T-cell (primary cell): ENCODE measurements at regions of chr6 and their contacts with region 1.

Region 1: GRCh38 chr6:139375232-139376016 is 976 bp upstream of the CITED2 start:
- DNase-seq: peak; percentile 76 to 91 (median 83)
- ATAC-seq: peak; percentile 65 to 71 (median 67)
- H3K4me3 ChIP-seq: peak overlapping the region; percentile 94 to 99
- H3K4me3 Mint-ChIP-seq: peak overlapping the region; percentile 96 to 100 (median 99)
- H3K27ac ChIP-seq: peak overlapping the region; percentile 93
- H3K27ac Mint-ChIP-seq: peak overlapping the region; percentile 98 to 100
- H3K4me1 ChIP-seq: peaks cover 13% of the 10 kb centered on the region in 2 experiments
- H3K4me1 Mint-ChIP-seq: peaks cover 27 to 47% (median 29%) of the 10 kb centered on the region in 3 donors
- H3K27me3 ChIP-seq: no peaks in the 10 kb centered on the region
- H3K27me3 Mint-ChIP-seq: no peaks in the 10 kb centered on the region

Region 2: GRCh38 chr6:137697267-137697938 is 1678.0 kb before region 1 on chr6:
- CTCF ChIA-PET with region 1: no interaction called
- POLR2A ChIA-PET with region 1: no interaction called
- DNase-seq: no peak
- ATAC-seq: no peak
- H3K4me3 ChIP-seq: no peak overlapping the region
- H3K4me3 Mint-ChIP-seq: no peak overlapping the region
- H3K27ac ChIP-seq: no peak overlapping the region
- H3K27ac Mint-ChIP-seq: no peak overlapping the region
- H3K4me1 ChIP-seq: peaks cover 9 to 11% of the 10 kb centered on the region in 2 experiments
- H3K4me1 Mint-ChIP-seq: peaks cover 16 to 19% (median 16%) of the 10 kb centered on the region in 3 donors
- H3K27me3 ChIP-seq: peaks cover 0 to 8% of the 10 kb centered on the region in 2 experiments
- H3K27me3 Mint-ChIP-seq: peaks cover 5 to 8% of the 10 kb centered on the region in 2 donors

Region 3: DNA sequence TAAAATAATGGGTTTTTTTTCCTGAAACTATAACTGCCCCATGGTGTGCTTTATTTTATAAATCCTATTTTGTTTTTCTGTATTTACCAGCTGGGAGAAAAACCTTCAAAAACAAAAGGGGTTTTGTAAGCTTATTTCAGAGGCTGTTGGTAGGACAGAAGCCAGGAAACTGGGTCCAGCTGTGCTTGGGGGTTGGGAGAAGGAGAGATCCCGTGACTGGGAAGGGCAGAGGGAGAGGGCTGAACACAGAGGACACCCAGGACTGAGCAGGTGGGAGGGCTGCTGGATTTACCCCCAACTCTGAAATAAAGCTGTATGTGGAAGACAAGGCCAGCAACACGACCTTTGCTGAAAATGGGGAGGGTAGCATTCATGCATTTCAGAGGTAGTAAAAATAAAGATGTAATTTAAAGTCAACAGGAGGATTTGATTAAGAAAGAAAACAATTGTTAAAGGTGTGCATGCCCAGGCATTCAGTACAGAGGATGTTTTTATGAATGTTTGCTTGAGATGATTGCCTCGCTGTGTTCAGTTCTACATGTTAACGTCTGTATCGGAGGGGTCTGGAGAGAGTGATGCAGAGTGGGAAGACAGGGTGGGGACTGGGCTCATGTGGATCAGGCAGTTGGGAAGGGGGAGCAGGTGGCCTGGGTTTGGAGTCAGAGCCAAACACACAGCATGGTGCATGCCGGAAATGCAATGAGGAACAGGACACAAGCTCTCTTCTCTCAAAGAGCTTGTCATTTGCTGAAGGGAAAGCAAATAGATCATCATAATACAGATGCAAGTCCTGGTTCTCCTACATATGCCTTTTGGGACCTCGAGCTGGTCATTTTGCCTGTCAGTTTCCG is 1192.3 kb before region 1 on chr6:
- CTCF ChIA-PET with region 1: no interaction called
- POLR2A ChIA-PET with region 1: no interaction called
- DNase-seq: no peak
- ATAC-seq: no peak
- H3K4me3 ChIP-seq: no peak overlapping the region
- H3K4me3 Mint-ChIP-seq: no peak overlapping the region
- H3K27ac ChIP-seq: no peak overlapping the region
- H3K27ac Mint-ChIP-seq: no peak overlapping the region
- H3K4me1 ChIP-seq: no peaks in the 10 kb centered on the region
- H3K4me1 Mint-ChIP-seq: no peaks in the 10 kb centered on the region
- H3K27me3 ChIP-seq: peaks cover 0 to 12% of the 10 kb centered on the region in 2 experiments
- H3K27me3 Mint-ChIP-seq: peaks cover 24 to 28% of the 10 kb centered on the region in 2 donors

Region 4: GRCh38 chr6:139124887-139125672 is 250.3 kb before region 1 on chr6:
- CTCF ChIA-PET with region 1: interaction called, 3 to 17 read pairs
- POLR2A ChIA-PET with region 1: interaction called, 3 to 10 read pairs
- DNase-seq: peak; percentile 59 to 91 (median 78)
- ATAC-seq: peak; percentile 98 to 99 (median 98)
- H3K4me3 ChIP-seq: no peak overlapping the region
- H3K4me3 Mint-ChIP-seq: peak overlapping the region; percentile 45 to 69 (median 52)
- H3K27ac ChIP-seq: peak overlapping the region; percentile 83
- H3K27ac Mint-ChIP-seq: peak overlapping the region; percentile 92 to 97
- H3K4me1 ChIP-seq: peaks cover 23 to 26% of the 10 kb centered on the region in 2 experiments
- H3K4me1 Mint-ChIP-seq: peaks cover 57 to 67% (median 61%) of the 10 kb centered on the region in 3 donors
- H3K27me3 ChIP-seq: no peaks in the 10 kb centered on the region
- H3K27me3 Mint-ChIP-seq: no peaks in the 10 kb centered on the region

Region 5: DNA sequence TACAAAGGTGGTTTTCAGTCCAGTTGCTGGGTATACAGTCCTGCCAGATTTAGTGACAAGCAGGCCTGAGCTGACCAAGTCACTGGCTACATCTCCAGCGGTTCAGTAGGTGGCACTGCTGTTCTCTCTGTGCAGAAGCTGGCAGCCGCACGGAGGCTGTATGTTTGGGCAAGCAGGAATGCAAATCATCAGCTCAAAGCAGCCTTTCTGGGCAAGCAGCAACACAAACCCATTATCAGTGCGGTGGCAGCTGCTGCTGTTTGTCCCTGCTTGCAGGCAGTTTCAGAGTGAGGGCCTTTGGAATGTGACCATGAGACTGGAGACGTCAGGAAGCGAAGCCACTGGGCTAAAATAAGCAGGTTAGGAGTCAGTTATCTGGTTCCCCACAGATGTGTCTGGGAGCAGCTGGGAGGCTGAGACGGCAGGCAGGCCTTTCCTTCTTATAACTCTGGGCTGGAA is 156.1 kb before region 1 on chr6:
- CTCF ChIA-PET with region 1: interaction called, 15 to 66 read pairs
- POLR2A ChIA-PET with region 1: interaction called, 3 to 4 read pairs
- DNase-seq: peak; percentile 40 to 82 (median 63)
- ATAC-seq: peak; percentile 99 to 100 (median 100)
- H3K4me3 ChIP-seq: no peak overlapping the region
- H3K4me3 Mint-ChIP-seq: peak overlapping the region; percentile 12 to 44 (median 41)
- H3K27ac ChIP-seq: peak overlapping the region; percentile 10
- H3K27ac Mint-ChIP-seq: peak overlapping the region; percentile 95 to 97
- H3K4me1 ChIP-seq: peaks cover 0 to 7% of the 10 kb centered on the region in 2 experiments
- H3K4me1 Mint-ChIP-seq: peaks cover 8 to 11% (median 10%) of the 10 kb centered on the region in 3 donors
- H3K27me3 ChIP-seq: no peaks in the 10 kb centered on the region
- H3K27me3 Mint-ChIP-seq: no peaks in the 10 kb centered on the region

Region 6: GRCh38 chr6:139323511-139324300 is 51.7 kb before region 1 on chr6:
- CTCF ChIA-PET with region 1: interaction called in 1 of 2 experiments, 6 read pairs
- POLR2A ChIA-PET with region 1: interaction called, 5 to 17 read pairs
- DNase-seq: peak; percentile 40 to 87 (median 75)
- ATAC-seq: peak; percentile 86 to 91 (median 89)
- H3K4me3 ChIP-seq: peak overlapping the region; percentile 56 to 78
- H3K4me3 Mint-ChIP-seq: peak overlapping the region; percentile 83 to 85 (median 84)
- H3K27ac ChIP-seq: peak overlapping the region; percentile 98
- H3K27ac Mint-ChIP-seq: peak overlapping the region; percentile 99
- H3K4me1 ChIP-seq: peaks cover 7 to 30% of the 10 kb centered on the region in 2 experiments
- H3K4me1 Mint-ChIP-seq: peaks cover 33 to 42% (median 41%) of the 10 kb centered on the region in 3 donors
- H3K27me3 ChIP-seq: no peaks in the 10 kb centered on the region
- H3K27me3 Mint-ChIP-seq: no peaks in the 10 kb centered on the region

Region 7: GRCh38 chr6:139490482-139490881 is 115.1 kb after region 1 on chr6:
- CTCF ChIA-PET with region 1: no interaction called
- POLR2A ChIA-PET with region 1: interaction called in 1 of 2 experiments, 10 read pairs
- DNase-seq: peak in 29 of 35 experiments; percentile 0 to 58 (median 18)
- ATAC-seq: peak in 3 of 4 experiments; percentile 41 to 71 (median 67)
- H3K4me3 ChIP-seq: no peak overlapping the region
- H3K4me3 Mint-ChIP-seq: no peak overlapping the region
- H3K27ac ChIP-seq: no peak overlapping the region
- H3K27ac Mint-ChIP-seq: peak overlapping the region; percentile 36 to 76
- H3K4me1 ChIP-seq: no peaks in the 10 kb centered on the region
- H3K4me1 Mint-ChIP-seq: peaks cover 6 to 11% (median 10%) of the 10 kb centered on the region in 3 donors
- H3K27me3 ChIP-seq: no peaks in the 10 kb centered on the region
- H3K27me3 Mint-ChIP-seq: no peaks in the 10 kb centered on the region